GM12878 (cell line): ENCODE measurements at regions of chr19 and their contacts with region 1.

Region 1: DNA sequence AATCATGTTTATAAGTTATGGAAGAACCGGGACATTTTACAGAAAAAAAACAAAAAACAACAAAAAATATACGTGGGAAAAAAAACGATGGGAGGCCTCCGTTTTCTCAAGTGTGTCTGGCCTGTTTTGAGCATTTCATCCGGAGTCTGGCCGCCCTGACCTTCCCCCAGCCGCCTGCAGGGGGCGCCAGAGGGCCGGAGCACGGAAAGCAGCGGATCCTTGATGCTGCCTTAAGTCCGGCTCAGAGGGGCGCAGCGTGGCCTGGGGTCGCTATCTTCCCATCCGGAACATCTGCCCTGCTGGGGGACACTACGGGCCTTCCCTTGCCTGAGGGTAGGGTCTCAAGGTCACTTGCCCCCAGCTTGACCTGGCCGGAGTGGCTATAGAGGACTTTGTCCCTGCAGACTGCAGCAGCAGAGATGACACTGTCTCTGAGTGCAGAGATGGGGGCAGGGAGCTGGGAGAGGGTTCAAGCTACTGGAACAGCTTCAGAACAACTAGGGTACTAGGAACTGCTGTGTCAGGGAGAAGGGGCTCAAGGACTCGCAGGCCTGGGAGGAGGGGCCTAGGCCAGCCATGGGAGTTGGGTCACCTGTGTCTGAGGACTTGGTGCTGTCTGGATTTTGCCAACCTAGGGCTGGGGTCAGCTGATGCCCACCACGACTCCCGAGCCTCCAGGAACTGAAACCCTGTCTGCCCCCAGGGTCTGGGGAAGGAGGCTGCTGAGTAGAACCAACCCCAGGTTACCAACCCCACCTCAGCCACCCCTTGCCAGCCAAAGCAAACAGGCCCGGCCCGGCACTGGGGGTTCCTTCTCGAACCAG is 1.8 kb upstream of the APOE start:
- DNase-seq: no peak
- ATAC-seq: peak; percentile 84
- H3K4me3 ChIP-seq: no peak overlapping the region
- H3K27ac ChIP-seq: no peak overlapping the region
- H3K4me1 ChIP-seq: no peaks in the 10 kb centered on the region
- H3K27me3 ChIP-seq: no peaks in the 10 kb centered on the region
- CTCF ChIP-seq: peak; percentile 93 to 99 (median 96)
- EP300 ChIP-seq: no peak
- POLR2A ChIP-seq: peak; percentile 25; the same call in 1 of the 2 replicates
- RAD21 ChIP-seq: peak; percentile 88

Region 2: DNA sequence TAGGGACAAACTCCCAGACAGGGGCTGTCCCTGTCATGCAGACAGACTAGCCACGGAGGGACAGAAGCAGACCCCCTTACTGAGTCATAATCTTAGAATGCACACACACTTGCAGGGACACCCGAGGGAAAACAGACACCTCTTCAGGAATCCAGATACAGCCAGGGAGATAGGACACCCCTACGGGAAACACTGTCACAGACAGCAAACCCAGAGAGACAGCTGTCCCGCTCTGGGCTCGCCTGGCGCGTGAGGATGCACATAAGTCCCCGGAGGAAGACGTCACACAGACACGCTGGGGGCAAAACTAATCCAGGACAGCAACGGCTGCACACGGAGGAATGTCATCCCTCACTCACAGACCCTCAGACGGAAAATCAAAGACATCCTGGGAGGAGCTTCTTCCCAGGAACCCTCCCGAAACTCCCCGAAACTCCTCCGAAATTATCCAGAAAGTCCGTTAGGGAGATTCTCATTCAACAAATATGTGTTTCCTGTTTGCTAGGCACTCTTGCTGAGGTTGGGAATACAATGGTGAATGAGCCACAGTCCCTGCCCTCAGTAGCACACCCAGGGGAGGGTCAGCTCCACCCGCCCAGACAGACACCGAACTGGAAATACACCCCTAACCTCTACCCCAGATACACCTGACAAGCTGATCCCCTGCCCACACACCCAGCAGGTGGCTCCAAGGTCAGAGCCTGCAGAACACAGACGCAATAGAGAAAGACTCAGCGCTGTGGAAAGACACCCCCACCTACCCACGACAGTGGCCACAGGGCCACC is 28.0 kb before region 1 on chr19:
- CTCF ChIA-PET with region 1: no interaction called
- POLR2A ChIA-PET with region 1: no interaction called
- RAD21 ChIA-PET with region 1: no interaction called
- SMC1A ChIA-PET with region 1: no interaction called
- in situ Hi-C with region 1: no loop called
- intact Hi-C with region 1: no loop called
- DNase-seq: no peak
- ATAC-seq: no peak
- H3K4me3 ChIP-seq: no peak overlapping the region
- H3K27ac ChIP-seq: no peak overlapping the region
- H3K4me1 ChIP-seq: no peaks in the 10 kb centered on the region
- H3K27me3 ChIP-seq: no peaks in the 10 kb centered on the region; a peak in 2 of 4 replicates
- CTCF ChIP-seq: no peak
- EP300 ChIP-seq: no peak
- POLR2A ChIP-seq: no peak
- RAD21 ChIP-seq: no peak

Region 3: DNA sequence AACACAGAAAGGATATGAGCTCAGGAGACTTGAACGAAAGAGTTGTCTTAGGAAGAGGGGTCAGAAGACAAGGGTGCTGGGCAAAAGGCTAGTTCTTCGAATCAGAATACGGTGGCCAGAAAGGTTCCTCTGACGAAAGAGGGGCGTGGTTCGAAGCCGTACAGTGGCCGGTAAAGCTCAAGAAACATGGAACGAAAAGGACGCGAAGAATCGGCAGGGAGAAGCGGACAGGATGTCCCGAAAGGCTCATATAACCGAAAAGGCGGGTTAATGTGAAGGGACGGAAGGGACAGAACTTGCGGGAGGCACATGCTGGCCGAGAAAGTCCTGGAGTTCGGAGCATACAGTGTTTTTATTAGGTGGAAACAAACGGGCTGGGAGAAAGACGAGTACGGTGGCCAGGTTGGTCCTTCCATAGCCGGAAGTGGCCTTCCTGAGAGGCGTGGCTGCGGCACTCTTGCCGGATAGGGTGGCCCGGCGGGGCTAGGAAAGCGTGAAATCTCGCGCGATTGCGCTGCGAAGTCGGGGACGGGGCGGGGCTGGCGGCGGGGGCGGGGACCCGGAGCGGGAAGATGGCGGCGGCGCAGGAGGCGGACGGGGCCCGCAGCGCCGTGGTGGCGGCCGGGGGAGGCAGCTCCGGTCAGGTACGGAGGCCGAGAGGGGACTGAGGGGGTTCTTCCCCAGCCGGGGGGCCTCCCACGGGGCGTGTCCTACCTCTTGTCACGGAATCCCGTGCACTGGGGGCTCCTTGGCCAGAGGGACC is 51.2 kb after region 1 on chr19 and contains the start of gene CLPTM1:
- CTCF ChIA-PET with region 1: interaction called, 37 read pairs
- POLR2A ChIA-PET with region 1: no interaction called
- RAD21 ChIA-PET with region 1: interaction called, 3 read pairs
- SMC1A ChIA-PET with region 1: interaction called, 11 read pairs
- in situ Hi-C with region 1: loop called (anchors 10 kb)
- intact Hi-C with region 1: loop called (anchors 2 kb)
- DNase-seq: peak; percentile 92
- ATAC-seq: peak; percentile 95
- H3K4me3 ChIP-seq: peak within 1 kb of the TSS; percentile 80
- H3K27ac ChIP-seq: peak within 1 kb of the TSS; percentile 100
- H3K4me1 ChIP-seq: peaks cover 10% of the 10 kb centered on the region
- H3K27me3 ChIP-seq: no peaks in the 10 kb centered on the region
- CTCF ChIP-seq: no peak
- EP300 ChIP-seq: no peak
- POLR2A ChIP-seq: peak; percentile 85
- RAD21 ChIP-seq: no peak
- polyA plus RNA-seq, gene CLPTM1: 0.42 to 2.3 TPM

Region 4: GRCh38 chr19:45331423-45331822 is 427.6 kb after region 1 on chr19:
- CTCF ChIA-PET with region 1: no interaction called
- POLR2A ChIA-PET with region 1: no interaction called
- RAD21 ChIA-PET with region 1: no interaction called
- SMC1A ChIA-PET with region 1: no interaction called
- in situ Hi-C with region 1: loop called (anchors 10 kb)
- intact Hi-C with region 1: loop called (anchors 5 kb)
- DNase-seq: no peak
- ATAC-seq: peak; percentile 34
- H3K4me3 ChIP-seq: no peak overlapping the region
- H3K27ac ChIP-seq: no peak overlapping the region
- H3K4me1 ChIP-seq: no peaks in the 10 kb centered on the region
- H3K27me3 ChIP-seq: no peaks in the 10 kb centered on the region
- CTCF ChIP-seq: no peak
- EP300 ChIP-seq: no peak
- POLR2A ChIP-seq: no peak
- RAD21 ChIP-seq: no peak